Heart right ventricle (tissue), 16 donors: ENCODE measurements at regions of chr6 and their contacts with region 1.

Region 1: DNA sequence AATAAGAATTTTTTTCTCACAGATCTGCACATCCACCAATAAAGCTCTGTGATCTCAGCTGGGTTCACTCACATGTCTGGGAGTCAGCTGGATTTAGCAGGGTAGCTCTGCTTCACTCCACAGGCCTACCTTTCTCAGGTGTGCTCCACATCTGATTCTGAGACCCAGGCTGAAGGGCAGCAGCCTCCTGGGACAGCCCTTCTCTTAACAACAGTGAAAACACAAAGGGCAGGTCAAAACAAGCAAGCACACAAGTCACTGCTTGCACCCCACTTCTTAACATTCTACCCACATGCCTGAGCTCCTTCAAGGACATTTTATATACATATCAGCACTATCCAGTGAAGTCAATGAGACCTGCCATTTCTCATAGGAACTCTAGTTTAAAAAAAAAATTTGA is 96.0 kb upstream of the MAP3K4 start:
- DNase-seq: no peak
- ATAC-seq: no peak
- H3K4me3 ChIP-seq: no peak overlapping the region
- H3K27ac ChIP-seq: no peak overlapping the region
- H3K4me1 ChIP-seq: peaks cover 0 to 10% (median 0%) of the 10 kb centered on the region in 9 donors
- H3K27me3 ChIP-seq: no peaks in the 10 kb centered on the region
- CTCF ChIP-seq: no peak

Region 2: DNA sequence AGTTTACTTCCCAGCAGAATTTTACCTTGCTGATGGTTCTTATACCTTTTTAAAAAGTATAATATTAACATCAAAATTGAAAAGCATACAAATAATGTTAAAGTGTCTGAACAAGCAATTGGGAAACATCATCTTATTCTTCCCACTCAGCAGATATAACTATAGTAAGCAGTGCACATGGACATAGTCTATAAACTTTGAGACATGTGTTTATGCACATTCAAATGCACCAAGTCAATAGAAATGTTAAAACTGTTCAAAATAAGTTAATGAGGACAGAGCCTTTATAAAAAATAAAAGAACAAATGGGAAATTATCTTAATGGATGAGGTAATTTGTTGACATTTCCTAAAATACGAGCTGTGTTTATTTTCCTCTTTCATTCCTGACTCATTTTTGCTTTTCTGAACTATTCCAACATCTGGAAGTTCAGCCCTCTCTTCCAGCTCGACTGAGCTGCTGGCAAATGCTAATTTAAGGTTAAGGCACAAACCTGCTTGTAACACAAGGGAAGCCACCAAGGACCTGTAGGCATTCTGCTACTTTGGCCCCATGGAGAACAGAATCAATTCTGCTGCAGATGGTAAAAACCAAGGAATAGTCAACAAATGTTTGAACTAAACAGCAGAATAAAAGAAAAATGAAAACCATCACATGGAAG is 14.3 kb before region 1 on chr6:
- intact Hi-C with region 1: loop called in 1 of 10 experiments (anchors 1 kb)
- DNase-seq: no peak
- ATAC-seq: peak in 3 of 8 donors; percentile 34 to 62 (median 39)
- H3K4me3 ChIP-seq: no peak overlapping the region
- H3K27ac ChIP-seq: no peak overlapping the region
- H3K4me1 ChIP-seq: peaks cover 0 to 21% (median 10%) of the 10 kb centered on the region in 9 donors
- H3K27me3 ChIP-seq: no peaks in the 10 kb centered on the region
- CTCF ChIP-seq: no peak

Region 3: DNA sequence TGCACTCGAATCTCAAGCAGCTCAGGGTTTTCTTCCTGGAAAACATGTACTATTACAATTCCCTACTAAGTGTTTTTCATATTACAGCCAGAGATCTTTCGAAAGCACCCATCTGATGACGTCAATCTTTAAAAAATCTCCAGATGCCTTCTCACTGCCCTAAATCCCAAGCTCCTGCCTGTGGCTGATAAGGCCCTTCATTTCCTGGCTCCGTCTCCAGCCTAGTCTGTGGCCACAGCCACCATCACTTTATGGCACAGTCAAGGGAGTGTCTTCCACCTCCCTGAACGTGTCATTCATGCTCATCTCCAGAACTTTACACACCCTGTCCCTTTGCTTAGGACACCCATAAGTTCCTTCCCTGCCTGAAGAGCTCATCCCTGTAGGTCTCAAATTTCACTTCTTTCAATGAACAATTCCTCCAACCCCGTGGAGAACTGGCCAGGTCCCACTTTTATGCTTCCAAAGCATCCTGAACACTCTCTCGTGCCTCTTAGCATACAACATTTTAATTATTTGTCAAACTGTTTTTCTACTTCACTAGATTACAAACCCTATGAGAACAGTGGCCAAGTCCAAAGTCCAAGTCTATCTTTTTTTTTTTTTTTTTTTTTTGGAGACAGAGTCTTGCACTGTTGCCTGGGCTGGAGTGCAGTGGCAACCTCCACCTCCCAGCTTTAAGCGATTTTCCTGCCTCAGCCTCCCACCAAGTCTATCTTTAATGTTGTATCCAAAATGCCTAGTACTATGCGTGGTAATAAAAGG is 484.5 kb after region 1 on chr6:
- intact Hi-C with region 1: no loop called
- DNase-seq: no peak
- ATAC-seq: peak in 4 of 8 donors; percentile 24 to 34 (median 30)
- H3K4me3 ChIP-seq: no peak overlapping the region
- H3K27ac ChIP-seq: no peak overlapping the region
- H3K4me1 ChIP-seq: peaks cover 0 to 10% (median 0%) of the 10 kb centered on the region in 9 donors
- H3K27me3 ChIP-seq: no peaks in the 10 kb centered on the region
- CTCF ChIP-seq: no peak